ENCODE measurements at regions of chr18 and their contacts with region 1.

Region 1: GRCh38 chr18:23340656-23341055 is 112.4 kb upstream of the RIOK3 start:
- DNase-seq: no peak
- ATAC-seq: no peak
- H3K4me3 Mint-ChIP-seq: no peak overlapping the region
- H3K27ac Mint-ChIP-seq: peak overlapping the region; percentile 84
- H3K4me1 Mint-ChIP-seq: peaks cover 37% of the 10 kb centered on the region
- H3K27me3 Mint-ChIP-seq: no peaks in the 10 kb centered on the region

Region 2: GRCh38 chr18:23365602-23366001 is 24.9 kb after region 1 on chr18:
- CTCF ChIA-PET with region 1: no interaction called
- POLR2A ChIA-PET with region 1: no interaction called
- intact Hi-C with region 1: no loop called
- DNase-seq: no peak
- ATAC-seq: no peak
- H3K4me3 Mint-ChIP-seq: no peak overlapping the region
- H3K27ac Mint-ChIP-seq: no peak overlapping the region
- H3K4me1 Mint-ChIP-seq: no peaks in the 10 kb centered on the region
- H3K27me3 Mint-ChIP-seq: no peaks in the 10 kb centered on the region

Region 3: DNA sequence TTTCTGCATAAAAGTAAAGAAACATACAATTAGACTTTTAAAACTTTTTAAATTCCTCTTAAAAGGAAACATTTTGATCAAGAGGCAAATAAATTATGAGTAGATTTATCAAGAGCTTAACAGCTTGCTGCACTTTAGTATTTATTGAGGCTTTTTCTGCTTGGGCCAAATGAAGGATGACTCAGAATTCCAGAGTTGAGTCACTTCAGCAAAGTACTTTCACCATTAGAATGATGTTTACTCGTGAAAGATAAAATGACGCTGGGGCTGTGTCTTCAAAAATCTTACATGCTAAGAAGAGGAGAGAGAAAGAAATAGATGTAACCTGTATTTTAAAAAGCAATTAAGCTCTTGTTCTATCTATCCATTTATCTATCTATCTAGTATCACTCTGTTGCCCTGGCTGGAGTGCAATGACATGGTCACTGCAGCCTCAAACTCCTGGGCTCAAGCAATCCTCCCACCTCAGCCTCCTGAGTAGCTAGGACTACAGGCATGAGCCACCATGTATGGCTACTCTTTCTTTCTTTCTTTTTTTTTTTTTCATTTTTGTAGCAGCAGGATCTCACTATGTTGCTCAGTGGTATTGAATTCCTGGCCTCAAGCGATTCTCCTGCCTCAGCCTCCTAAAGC is 37.1 kb after region 1 on chr18:
- CTCF ChIA-PET with region 1: interaction called, 4 read pairs
- POLR2A ChIA-PET with region 1: no interaction called
- intact Hi-C with region 1: loop called in 1 of 2 experiments (anchors 2 kb)
- DNase-seq: peak; percentile 11
- ATAC-seq: peak; percentile 89
- H3K4me3 Mint-ChIP-seq: no peak overlapping the region
- H3K27ac Mint-ChIP-seq: peak overlapping the region; percentile 69
- H3K4me1 Mint-ChIP-seq: peaks cover 16% of the 10 kb centered on the region
- H3K27me3 Mint-ChIP-seq: no peaks in the 10 kb centered on the region

Region 4: GRCh38 chr18:24954341-24954740 is 1613.7 kb after region 1 on chr18:
- CTCF ChIA-PET with region 1: no interaction called
- POLR2A ChIA-PET with region 1: no interaction called
- intact Hi-C with region 1: no loop called
- DNase-seq: no peak
- ATAC-seq: no peak
- H3K4me3 Mint-ChIP-seq: no peak overlapping the region
- H3K27ac Mint-ChIP-seq: no peak overlapping the region
- H3K4me1 Mint-ChIP-seq: no peaks in the 10 kb centered on the region
- H3K27me3 Mint-ChIP-seq: no peaks in the 10 kb centered on the region